ENCODE measurements at regions of chr3 and their contacts with region 1.

Region 1: GRCh38 chr3:20185701-20186598 is at the start of gene SGO1:
- DNase-seq: peak; percentile 100
- ATAC-seq: peak; percentile 99
- total RNA-seq, gene SGO1: 0.59 TPM

Region 2: DNA sequence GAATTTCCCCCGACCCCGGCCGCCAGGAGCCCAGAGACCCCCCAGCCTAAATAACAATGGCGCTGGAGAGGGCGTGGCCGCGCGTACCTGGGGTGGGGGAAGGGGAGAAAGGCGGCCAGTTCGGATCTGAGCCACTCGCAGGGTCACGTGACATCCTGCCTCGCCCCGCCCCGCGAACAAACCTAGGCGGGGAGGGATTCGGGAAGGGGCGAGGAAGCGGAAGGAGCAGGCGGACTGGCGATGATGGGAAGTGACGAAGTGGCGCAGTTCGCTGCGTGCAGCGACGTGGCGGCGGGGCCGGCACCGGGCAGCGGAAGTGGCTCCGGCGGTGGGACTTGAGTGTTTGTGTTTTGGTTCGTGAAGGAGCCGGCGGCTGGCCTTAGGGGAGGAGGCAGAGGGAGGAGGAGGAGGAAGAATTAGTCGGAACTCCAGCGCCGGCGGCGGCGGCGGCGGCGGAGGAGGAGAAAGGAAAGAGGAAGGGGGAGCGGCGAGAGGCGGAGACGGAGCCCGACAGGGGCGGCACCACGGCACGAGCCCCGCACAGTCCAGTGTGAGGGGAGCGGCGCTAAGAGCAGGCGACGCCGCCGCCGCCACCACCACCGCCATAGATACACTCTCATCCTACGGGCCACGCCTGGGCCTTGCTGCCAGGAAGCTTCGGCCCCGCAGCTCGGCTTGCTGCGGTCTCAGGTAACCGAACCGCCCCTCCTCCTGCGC is 239.0 kb before region 1 on chr3 and contains the start of gene RAB5A:
- intact Hi-C with region 1: loop called (anchors 2 kb)
- DNase-seq: peak; percentile 98
- ATAC-seq: peak; percentile 99
- total RNA-seq, gene RAB5A: 52.6 TPM

Measured in Right ventricle myocardium superior (tissue), 1 donor.